ENCODE measurements at regions of chr17 and their contacts with region 1.

Region 1: DNA sequence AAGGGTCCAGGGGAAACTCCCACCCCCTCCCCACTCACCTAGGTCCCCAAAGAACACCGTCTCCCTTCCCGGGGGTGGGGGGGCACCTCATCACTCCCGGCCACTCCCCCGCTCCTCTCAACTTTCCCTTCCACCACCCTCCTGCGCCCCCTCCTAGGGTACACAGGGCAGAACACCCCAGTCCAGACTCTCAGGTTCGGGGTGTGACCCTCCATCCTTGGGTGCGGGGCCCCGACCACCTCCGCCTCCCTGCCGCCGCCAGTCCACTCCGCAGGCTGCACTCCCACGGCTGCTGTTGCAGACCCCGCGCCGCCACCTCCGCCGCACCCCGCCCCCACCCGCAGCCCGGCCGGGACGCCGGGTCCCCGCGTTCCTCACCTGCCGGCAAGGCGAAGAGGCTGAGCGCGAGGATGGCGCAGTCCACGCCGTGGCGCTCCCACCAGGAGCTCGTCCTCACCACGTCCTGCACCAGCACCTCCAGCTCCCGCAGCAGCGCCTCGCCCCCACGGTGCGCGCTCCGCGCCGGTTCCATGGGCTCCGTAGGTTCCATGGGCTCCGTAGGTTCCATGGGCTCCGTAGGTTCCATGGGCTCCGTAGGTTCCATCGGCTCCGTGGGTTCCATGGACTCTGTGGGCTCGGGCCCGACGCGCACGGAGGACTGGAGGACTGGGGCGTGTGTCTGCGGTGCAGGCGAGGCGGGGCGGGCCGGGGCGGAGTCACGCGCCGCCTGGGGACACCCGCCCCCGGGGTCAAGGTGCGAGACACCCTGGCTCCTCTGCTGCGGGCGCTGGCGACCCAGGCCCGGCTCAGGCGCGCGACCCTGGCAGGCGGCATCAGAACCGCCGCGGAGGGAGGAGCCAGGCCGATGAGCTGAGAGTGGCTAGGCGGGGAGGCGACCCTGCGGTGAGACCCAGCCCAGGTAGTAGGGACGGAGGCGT is at the start of gene FADS6:
- DNase-seq: no peak
- H3K4me3 ChIP-seq: peak within 1 kb of the TSS; percentile 61 to 75 (median 64)
- H3K27ac ChIP-seq: no peak within 1 kb of the TSS
- H3K4me1 ChIP-seq: peaks cover 0 to 10% (median 4%) of the 10 kb centered on the region in 4 experiments; a peak in 4 of 7 replicates
- H3K27me3 ChIP-seq: peaks cover 16 to 43% (median 37%) of the 10 kb centered on the region in 4 experiments; a peak in 6 of 7 replicates
- CTCF ChIP-seq: no peak
- EP300 ChIP-seq: no peak
- POLR2A ChIP-seq: no peak
- RAD21 ChIP-seq: no peak
- total RNA-seq, gene FADS6: 0.56 and 0.80 TPM in 2 replicates

Region 2: GRCh38 chr17:74873038-74873873 is 20.0 kb before region 1 on chr17:
- CTCF ChIA-PET with region 1: interaction called, 7 read pairs
- POLR2A ChIA-PET with region 1: interaction called, 12 read pairs
- DNase-seq: peak; percentile 98 to 99
- H3K4me3 ChIP-seq: peak overlapping the region; percentile 70 to 99 (median 84)
- H3K27ac ChIP-seq: peak overlapping the region; percentile 90
- H3K4me1 ChIP-seq: peaks cover 0 to 14% (median 6%) of the 10 kb centered on the region in 4 experiments; a peak in 6 of 7 replicates
- H3K27me3 ChIP-seq: peaks cover 0 to 3% (median 0%) of the 10 kb centered on the region in 4 experiments; a peak in 2 of 7 replicates
- CTCF ChIP-seq: no peak
- EP300 ChIP-seq: peak in 1 of 2 experiments; percentile 58; a peak in 1 of 3 replicates
- POLR2A ChIP-seq: peak in 1 of 2 experiments; percentile 98; a peak in 2 of 3 replicates
- RAD21 ChIP-seq: no peak

Region 3: DNA sequence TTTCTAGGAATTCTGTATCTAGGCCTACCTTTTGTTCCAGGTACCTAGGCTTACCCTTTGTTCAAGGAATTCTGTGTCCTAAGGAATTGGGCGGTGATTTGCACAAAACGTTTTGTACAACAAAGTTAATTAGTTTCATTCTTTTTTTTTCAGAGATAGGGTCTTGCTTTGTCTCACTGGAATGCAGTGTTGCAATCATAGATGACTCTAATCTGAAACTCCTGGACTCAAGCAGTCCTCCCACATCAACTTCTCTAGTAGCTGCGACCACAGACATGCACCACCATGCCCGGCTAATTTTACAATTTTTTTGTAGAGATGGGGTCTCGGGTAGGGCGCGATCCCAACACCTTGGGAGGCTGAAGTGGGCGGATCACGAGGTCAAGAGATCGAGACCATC is 101.2 kb after region 1 on chr17:
- CTCF ChIA-PET with region 1: no interaction called
- POLR2A ChIA-PET with region 1: no interaction called
- DNase-seq: no peak
- H3K4me3 ChIP-seq: no peak overlapping the region
- H3K27ac ChIP-seq: no peak overlapping the region
- H3K4me1 ChIP-seq: no peaks in the 10 kb centered on the region
- H3K27me3 ChIP-seq: no peaks in the 10 kb centered on the region
- CTCF ChIP-seq: no peak
- EP300 ChIP-seq: no peak
- POLR2A ChIP-seq: no peak
- RAD21 ChIP-seq: no peak